MCF 10A (cell line): ENCODE measurements at regions of chr16 and their contacts with region 1.

Region 1: GRCh38 chr16:15704545-15704987 is 54.5 kb downstream of the NDE1 start:
- DNase-seq: peak; percentile 73
- H3K4me3 Mint-ChIP-seq: no peak overlapping the region
- H3K27ac Mint-ChIP-seq: no peak overlapping the region
- H3K4me1 Mint-ChIP-seq: no peaks in the 10 kb centered on the region
- H3K27me3 Mint-ChIP-seq: no peaks in the 10 kb centered on the region
- CTCF ChIP-seq: peak; percentile 62

Region 2: DNA sequence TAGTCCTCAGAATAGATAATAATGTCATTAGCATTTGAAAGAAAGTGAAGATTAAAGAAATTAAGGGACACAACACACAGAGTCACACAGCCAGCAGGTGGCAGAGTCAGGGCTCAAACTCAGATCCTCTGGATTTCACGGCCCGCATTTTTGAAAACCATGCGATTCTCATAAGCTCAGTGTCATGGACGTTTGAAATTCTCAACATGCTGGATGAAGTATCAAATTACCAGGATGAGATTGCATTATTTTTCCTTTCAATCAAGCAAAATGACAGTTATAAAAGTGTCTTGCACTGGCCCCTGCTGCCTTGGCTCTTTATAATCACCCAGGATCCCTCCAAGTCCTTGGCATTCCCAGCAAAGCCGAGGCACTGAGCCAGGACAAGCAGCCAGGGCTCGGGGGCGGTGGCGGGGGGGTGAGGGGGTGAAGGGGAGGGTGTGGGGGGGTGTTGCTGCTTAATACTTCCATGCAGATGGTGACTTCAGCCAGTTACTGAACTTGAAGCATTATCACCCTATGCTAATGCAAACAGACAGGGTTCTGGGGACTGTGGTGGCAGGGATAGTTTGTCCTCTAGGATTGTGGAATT is 276.8 kb before region 1 on chr16:
- CTCF ChIA-PET with region 1: no interaction called
- POLR2A ChIA-PET with region 1: no interaction called
- intact Hi-C with region 1: loop called (anchors 1 kb)
- DNase-seq: peak; percentile 75
- H3K4me3 Mint-ChIP-seq: no peak overlapping the region
- H3K27ac Mint-ChIP-seq: no peak overlapping the region
- H3K4me1 Mint-ChIP-seq: no peaks in the 10 kb centered on the region
- H3K27me3 Mint-ChIP-seq: no peaks in the 10 kb centered on the region
- CTCF ChIP-seq: peak; percentile 49

Region 3: DNA sequence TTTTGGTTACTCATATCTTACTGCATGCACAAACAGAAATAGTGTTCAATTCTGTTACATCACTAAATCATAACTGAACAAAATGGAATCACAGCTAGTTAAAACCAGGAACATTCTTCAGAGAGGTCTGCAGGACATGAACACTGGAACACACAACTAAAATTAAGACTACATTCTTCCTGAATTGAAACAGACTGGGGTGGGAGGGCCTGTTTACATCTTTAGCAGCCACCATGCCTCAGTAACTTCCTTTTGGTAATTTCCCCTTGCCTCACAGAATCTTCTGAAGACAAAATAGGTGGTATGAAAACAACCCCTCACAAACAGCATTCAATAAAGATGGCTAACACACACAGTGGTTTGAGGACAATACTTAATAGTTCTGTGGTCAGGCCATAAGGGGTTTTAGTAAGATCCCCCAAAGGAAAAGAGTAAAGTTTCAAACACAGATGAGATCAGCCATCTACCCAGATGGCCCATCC is 68.1 kb before region 1 on chr16:
- CTCF ChIA-PET with region 1: interaction called, 10 read pairs
- POLR2A ChIA-PET with region 1: interaction called, 4 read pairs
- intact Hi-C with region 1: no loop called
- DNase-seq: no peak
- H3K4me3 Mint-ChIP-seq: no peak overlapping the region
- H3K27ac Mint-ChIP-seq: no peak overlapping the region
- H3K4me1 Mint-ChIP-seq: peaks cover 5% of the 10 kb centered on the region
- H3K27me3 Mint-ChIP-seq: no peaks in the 10 kb centered on the region
- CTCF ChIP-seq: no peak

Region 4: DNA sequence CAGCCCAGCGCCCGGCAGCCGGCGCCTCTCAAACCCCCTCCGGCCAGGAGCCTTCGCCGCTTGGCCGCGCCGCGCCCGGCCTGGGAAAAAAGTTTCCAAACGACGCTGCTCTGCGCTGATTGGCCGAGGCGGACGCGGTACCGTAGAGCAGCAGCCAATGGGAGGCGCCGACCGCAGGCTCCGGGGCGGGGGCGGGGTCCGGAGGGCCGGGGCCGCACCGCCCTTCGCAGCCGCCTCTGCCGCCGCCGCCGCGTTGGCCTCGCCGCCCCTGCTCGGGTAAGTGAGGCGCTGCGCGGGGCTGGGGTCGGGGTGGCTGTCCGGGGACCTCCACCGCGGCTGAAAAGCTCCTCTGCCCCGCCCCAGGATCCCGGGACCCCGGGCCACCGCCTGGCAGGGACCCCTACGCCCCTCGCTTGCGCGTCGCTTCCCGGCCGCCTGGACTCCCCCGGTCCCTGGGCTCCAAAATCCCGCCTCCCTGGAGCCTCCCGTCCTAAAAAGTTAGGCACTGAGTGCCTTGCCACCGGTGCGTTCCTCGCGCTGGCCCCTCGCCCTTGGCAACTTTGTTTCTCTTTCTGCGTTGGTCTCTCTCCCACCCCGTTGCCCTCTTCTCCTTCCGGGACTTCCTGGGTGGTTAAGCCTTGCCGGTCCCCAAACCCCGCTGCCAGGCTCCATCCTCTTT is 54.4 kb before region 1 on chr16 and contains the start of gene NDE1:
- CTCF ChIA-PET with region 1: interaction called, 4 read pairs
- POLR2A ChIA-PET with region 1: interaction called, 4 read pairs
- intact Hi-C with region 1: loop called (anchors 2 kb)
- DNase-seq: peak; percentile 90
- H3K4me3 Mint-ChIP-seq: peak within 1 kb of the TSS; percentile 100
- H3K27ac Mint-ChIP-seq: peak within 1 kb of the TSS; percentile 96
- H3K4me1 Mint-ChIP-seq: peaks cover 8% of the 10 kb centered on the region
- H3K27me3 Mint-ChIP-seq: no peaks in the 10 kb centered on the region
- CTCF ChIP-seq: no peak
- total RNA-seq, gene NDE1: 121 and 162 TPM in 2 replicates

Region 5: GRCh38 chr16:15690296-15690695 is 14.3 kb before region 1 on chr16:
- CTCF ChIA-PET with region 1: interaction called, 32 read pairs
- POLR2A ChIA-PET with region 1: interaction called, 3 read pairs
- intact Hi-C with region 1: no loop called
- DNase-seq: peak; percentile 11
- H3K4me3 Mint-ChIP-seq: no peak overlapping the region
- H3K27ac Mint-ChIP-seq: peak overlapping the region; percentile 39
- H3K4me1 Mint-ChIP-seq: peaks cover 6% of the 10 kb centered on the region
- H3K27me3 Mint-ChIP-seq: no peaks in the 10 kb centered on the region
- CTCF ChIP-seq: no peak

Region 6: DNA sequence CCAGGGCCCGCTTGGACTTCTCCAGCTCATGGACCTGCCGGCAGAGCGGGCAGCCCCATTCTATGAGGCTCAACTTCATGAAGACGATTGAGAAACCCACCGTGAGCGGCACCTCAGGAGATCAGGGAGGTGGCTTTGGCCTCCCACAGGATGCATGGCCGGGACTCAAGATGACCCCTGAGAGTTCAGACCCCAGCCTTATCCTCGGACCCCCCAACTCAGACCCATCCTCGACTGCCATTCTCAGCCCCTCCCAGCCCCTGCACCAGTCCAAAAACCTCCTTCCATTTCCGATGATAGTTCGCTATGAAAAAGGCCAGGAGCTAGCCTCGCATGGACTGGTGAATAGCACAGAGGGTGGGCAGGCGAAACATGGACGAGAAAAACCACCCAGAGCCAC is 16.5 kb after region 1 on chr16:
- CTCF ChIA-PET with region 1: interaction called, 10 read pairs
- POLR2A ChIA-PET with region 1: no interaction called
- intact Hi-C with region 1: no loop called
- DNase-seq: no peak
- H3K4me3 Mint-ChIP-seq: no peak overlapping the region
- H3K27ac Mint-ChIP-seq: no peak overlapping the region
- H3K4me1 Mint-ChIP-seq: no peaks in the 10 kb centered on the region
- H3K27me3 Mint-ChIP-seq: no peaks in the 10 kb centered on the region
- CTCF ChIP-seq: no peak